GM13977 (cell line): ENCODE measurements at regions of chr11 and their contacts with region 1.

Region 1: DNA sequence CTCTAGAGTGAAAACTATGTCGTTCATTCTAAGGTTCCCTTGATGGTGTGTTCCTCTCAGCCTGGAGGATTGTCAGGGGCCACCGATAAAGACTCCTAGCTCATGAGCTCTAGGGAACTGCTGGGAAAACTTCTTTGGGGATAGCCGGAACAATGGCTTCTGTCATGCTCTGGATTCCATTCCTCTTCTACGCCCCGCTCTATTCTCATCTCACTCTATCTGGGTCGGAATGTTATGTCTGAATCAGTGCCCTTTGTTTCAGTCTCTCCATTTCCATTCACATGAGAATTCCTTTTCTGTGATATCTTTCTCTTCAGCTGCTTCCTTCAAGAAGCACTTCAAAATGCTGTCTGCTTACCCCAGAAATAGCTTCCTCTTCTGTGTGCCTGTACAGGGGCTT is 16.9 kb upstream of the SLCO2B1 start:
- DNase-seq: no peak
- CTCF ChIP-seq: no peak

Region 2: DNA sequence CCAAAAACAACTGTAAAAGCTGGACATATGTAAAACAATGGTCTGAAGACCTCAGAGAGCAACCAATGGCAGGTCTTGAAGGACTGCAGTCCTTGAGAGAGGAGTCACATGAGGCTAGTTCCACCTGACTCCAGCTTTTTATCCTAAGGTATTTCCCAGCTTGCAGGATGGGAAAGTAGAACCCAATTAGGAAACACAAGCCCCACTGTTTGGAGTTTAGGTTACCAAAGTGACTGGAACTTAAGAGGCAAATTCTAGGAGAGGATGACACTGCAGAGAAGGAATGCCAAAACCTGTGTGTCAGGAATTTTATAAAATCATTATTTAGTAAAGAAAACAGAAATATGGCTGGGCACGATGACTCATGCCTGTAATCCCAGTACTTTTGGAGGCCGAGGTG is 55.7 kb before region 1 on chr11:
- in situ Hi-C with region 1: loop called (anchors 10 kb)
- DNase-seq: no peak
- CTCF ChIP-seq: no peak